ENCODE measurements at regions of chr17 and their contacts with region 1.

Region 1: GRCh38 chr17:40559954-40560591 is 5.2 kb downstream of the CCR7 start:
- DNase-seq: peak; percentile 90 to 94
- H3K4me3 ChIP-seq: no peak overlapping the region
- H3K4me3 Mint-ChIP-seq: peak overlapping the region; percentile 30
- H3K27ac Mint-ChIP-seq: no peak overlapping the region
- H3K4me1 ChIP-seq: peaks cover 8% of the 10 kb centered on the region; the same call in 1 of the 2 replicates
- H3K4me1 Mint-ChIP-seq: peaks cover 6% of the 10 kb centered on the region
- H3K27me3 ChIP-seq: no peaks in the 10 kb centered on the region
- H3K27me3 Mint-ChIP-seq: peaks cover 6% of the 10 kb centered on the region
- CTCF ChIP-seq: peak; percentile 97 to 99

Region 2: GRCh38 chr17:40417609-40418427 is 142.3 kb before region 1 on chr17 and contains the start of gene TOP2A:
- CTCF ChIA-PET with region 1: interaction called, 34 read pairs
- POLR2A ChIA-PET with region 1: interaction called, 4 read pairs
- intact Hi-C with region 1: no loop called
- DNase-seq: peak; percentile 99 to 100
- H3K4me3 ChIP-seq: peak within 1 kb of the TSS; percentile 89
- H3K4me3 Mint-ChIP-seq: peak within 1 kb of the TSS; percentile 99
- H3K27ac Mint-ChIP-seq: peak within 1 kb of the TSS; percentile 99
- H3K4me1 ChIP-seq: peaks cover 16% of the 10 kb centered on the region; the same call in 1 of the 2 replicates
- H3K4me1 Mint-ChIP-seq: no peaks in the 10 kb centered on the region
- H3K27me3 ChIP-seq: no peaks in the 10 kb centered on the region
- H3K27me3 Mint-ChIP-seq: no peaks in the 10 kb centered on the region
- CTCF ChIP-seq: no peak
- total RNA-seq, gene TOP2A: 226 and 237 TPM in 2 replicates

Region 3: DNA sequence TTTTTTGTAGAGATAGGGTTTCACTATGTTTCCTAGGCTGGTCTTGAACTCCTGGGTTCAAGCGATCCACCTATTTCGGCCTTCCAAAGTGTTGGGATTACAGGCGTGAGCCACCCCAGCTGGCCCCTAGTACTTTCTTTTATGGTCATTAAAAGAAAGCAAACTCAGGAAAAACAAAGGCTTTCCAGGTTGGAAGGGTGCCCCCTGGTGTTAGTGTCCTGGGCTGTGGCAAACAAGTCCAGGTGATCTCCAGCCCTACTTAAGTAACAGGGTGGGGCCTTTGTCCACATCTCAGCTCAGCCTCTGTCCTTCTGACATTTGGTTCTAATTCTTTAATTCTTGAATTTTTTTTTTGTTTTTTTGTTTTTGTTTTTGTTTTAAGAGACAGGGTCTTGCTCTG is 109.9 kb before region 1 on chr17:
- CTCF ChIA-PET with region 1: interaction called, 14 read pairs
- POLR2A ChIA-PET with region 1: no interaction called
- intact Hi-C with region 1: no loop called
- DNase-seq: peak; percentile 74 to 77
- H3K4me3 ChIP-seq: no peak overlapping the region
- H3K4me3 Mint-ChIP-seq: no peak overlapping the region
- H3K27ac Mint-ChIP-seq: no peak overlapping the region
- H3K4me1 ChIP-seq: peaks cover 17% of the 10 kb centered on the region
- H3K4me1 Mint-ChIP-seq: peaks cover 9% of the 10 kb centered on the region
- H3K27me3 ChIP-seq: no peaks in the 10 kb centered on the region
- H3K27me3 Mint-ChIP-seq: no peaks in the 10 kb centered on the region
- CTCF ChIP-seq: peak; percentile 48 to 69

Region 4: DNA sequence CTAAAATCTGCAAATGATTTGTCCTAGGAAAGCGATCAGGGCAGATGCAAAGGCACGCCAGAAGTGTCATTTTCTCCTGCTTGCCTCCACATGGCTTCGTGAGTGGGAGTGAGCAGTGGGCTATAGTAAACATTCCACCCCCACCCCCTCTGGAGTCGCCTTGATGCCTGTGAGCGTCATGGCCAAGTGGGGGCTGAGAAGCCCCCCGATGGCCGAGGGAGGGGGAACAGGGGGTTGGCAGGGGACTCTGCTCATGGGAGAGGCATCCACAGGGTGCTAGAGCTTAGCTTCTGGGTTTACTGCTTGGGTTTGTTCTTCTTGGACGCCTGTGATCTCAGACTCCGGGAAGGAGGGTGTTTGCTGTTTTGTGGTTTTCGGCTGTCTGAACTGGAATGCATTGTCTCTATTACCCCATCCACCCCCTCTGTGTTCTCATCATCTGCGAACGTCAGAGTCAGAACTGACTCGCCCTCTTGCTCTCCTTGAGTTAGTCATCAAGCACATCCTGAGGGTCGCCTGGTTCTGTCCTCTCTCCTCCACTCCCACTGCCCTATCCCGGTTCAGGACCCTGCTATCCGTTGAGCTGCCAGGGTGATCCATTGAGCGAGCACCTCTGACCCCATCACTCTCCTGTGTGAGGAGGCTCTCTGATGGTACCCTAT is 74.1 kb before region 1 on chr17:
- CTCF ChIA-PET with region 1: interaction called, 5 read pairs
- POLR2A ChIA-PET with region 1: no interaction called
- intact Hi-C with region 1: loop called (anchors 5 kb)
- DNase-seq: no peak
- H3K4me3 ChIP-seq: no peak overlapping the region
- H3K4me3 Mint-ChIP-seq: no peak overlapping the region
- H3K27ac Mint-ChIP-seq: no peak overlapping the region
- H3K4me1 ChIP-seq: peaks cover 10% of the 10 kb centered on the region; the same call in 1 of the 2 replicates
- H3K4me1 Mint-ChIP-seq: peaks cover 27% of the 10 kb centered on the region
- H3K27me3 ChIP-seq: no peaks in the 10 kb centered on the region
- H3K27me3 Mint-ChIP-seq: no peaks in the 10 kb centered on the region
- CTCF ChIP-seq: no peak

Region 5: DNA sequence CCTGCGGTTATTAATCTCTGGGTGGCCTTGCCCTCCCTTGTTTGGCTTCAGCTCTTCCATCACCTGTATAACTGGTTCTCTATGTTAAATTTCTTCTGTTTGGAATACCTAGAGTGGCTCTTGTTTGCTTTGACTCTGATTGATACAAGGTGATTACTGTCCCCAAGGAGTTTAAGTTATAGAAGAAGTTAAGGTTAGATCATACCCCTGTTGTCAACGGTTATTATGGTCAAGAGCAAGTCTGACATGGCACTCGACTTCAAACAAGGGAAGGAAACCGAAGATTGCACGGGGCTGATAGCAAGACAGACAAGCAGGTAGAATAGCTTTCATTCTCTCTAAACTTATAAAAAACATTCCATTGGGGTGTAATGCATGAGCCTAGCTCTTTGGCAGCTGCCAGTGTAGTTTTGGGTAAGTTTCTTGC is 16.2 kb after region 1 on chr17:
- CTCF ChIA-PET with region 1: no interaction called
- POLR2A ChIA-PET with region 1: no interaction called
- intact Hi-C with region 1: no loop called
- DNase-seq: no peak
- H3K4me3 ChIP-seq: no peak overlapping the region
- H3K4me3 Mint-ChIP-seq: no peak overlapping the region
- H3K27ac Mint-ChIP-seq: no peak overlapping the region
- H3K4me1 ChIP-seq: no peaks in the 10 kb centered on the region
- H3K4me1 Mint-ChIP-seq: no peaks in the 10 kb centered on the region
- H3K27me3 ChIP-seq: no peaks in the 10 kb centered on the region
- H3K27me3 Mint-ChIP-seq: peaks cover 6% of the 10 kb centered on the region
- CTCF ChIP-seq: no peak

Region 6: GRCh38 chr17:40615295-40615988 is 55.4 kb after region 1 on chr17:
- CTCF ChIA-PET with region 1: interaction called, 16 read pairs
- POLR2A ChIA-PET with region 1: no interaction called
- intact Hi-C with region 1: no loop called
- DNase-seq: peak; percentile 87
- H3K4me3 ChIP-seq: no peak overlapping the region
- H3K4me3 Mint-ChIP-seq: no peak overlapping the region
- H3K27ac Mint-ChIP-seq: no peak overlapping the region
- H3K4me1 ChIP-seq: peaks cover 27% of the 10 kb centered on the region
- H3K4me1 Mint-ChIP-seq: peaks cover 25% of the 10 kb centered on the region
- H3K27me3 ChIP-seq: no peaks in the 10 kb centered on the region
- H3K27me3 Mint-ChIP-seq: no peaks in the 10 kb centered on the region
- CTCF ChIP-seq: peak; percentile 80 to 82